PC-9 (cell line): ENCODE measurements at regions of chr20 and their contacts with region 1.

Region 1: DNA sequence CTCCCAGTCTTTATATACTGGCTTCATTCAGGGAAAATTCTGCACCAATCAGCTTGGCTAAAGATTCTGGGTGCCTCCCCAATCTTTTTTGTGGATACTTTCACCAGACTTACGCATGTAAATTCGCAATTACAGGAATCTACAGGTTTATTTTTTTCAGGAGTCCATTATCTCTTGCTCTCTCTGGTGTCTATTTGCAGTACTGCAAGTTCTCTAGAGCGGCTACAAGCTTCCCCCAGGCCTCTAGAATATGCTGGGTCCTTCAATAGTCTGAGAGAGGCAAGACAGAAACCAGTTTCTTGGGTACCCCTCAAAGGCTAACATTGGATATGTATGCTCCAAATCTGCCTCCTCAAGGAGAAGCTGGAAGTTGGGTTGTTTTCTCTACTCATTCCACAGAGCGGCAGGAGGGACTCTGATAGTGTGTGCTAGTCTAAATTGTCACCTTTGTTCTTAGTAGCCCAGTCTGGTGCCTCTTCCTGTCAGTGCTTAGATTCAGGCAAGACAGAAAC is 58.5 kb downstream of the SUN5 start:
- DNase-seq: no peak
- H3K4me3 ChIP-seq: no peak overlapping the region
- H3K27ac ChIP-seq: no peak overlapping the region
- H3K4me1 ChIP-seq: no peaks in the 10 kb centered on the region
- H3K27me3 ChIP-seq: peaks cover 45% of the 10 kb centered on the region
- CTCF ChIP-seq: peak; percentile 64

Region 2: GRCh38 chr20:32664678-32665159 is 281.0 kb before region 1 on chr20:
- CTCF ChIA-PET with region 1: interaction called, 10 read pairs
- POLR2A ChIA-PET with region 1: no interaction called
- intact Hi-C with region 1: no loop called
- DNase-seq: no peak
- H3K4me3 ChIP-seq: no peak overlapping the region
- H3K27ac ChIP-seq: no peak overlapping the region
- H3K4me1 ChIP-seq: peaks cover 11% of the 10 kb centered on the region
- H3K27me3 ChIP-seq: no peaks in the 10 kb centered on the region
- CTCF ChIP-seq: no peak

Region 3: GRCh38 chr20:32674362-32674789 is 271.4 kb before region 1 on chr20:
- CTCF ChIA-PET with region 1: no interaction called
- POLR2A ChIA-PET with region 1: no interaction called
- intact Hi-C with region 1: loop called (anchors 5 kb)
- DNase-seq: peak; percentile 58 to 73
- H3K4me3 ChIP-seq: no peak overlapping the region
- H3K27ac ChIP-seq: no peak overlapping the region
- H3K4me1 ChIP-seq: peaks cover 10% of the 10 kb centered on the region
- H3K27me3 ChIP-seq: no peaks in the 10 kb centered on the region
- CTCF ChIP-seq: peak; percentile 90

Region 4: GRCh38 chr20:32819992-32820710 is 125.6 kb before region 1 on chr20:
- CTCF ChIA-PET with region 1: no interaction called
- POLR2A ChIA-PET with region 1: interaction called, 15 read pairs
- intact Hi-C with region 1: no loop called
- DNase-seq: no peak
- H3K4me3 ChIP-seq: peak overlapping the region; percentile 76
- H3K27ac ChIP-seq: peak overlapping the region; percentile 50; the same call in 1 of the 2 replicates
- H3K4me1 ChIP-seq: peaks cover 34% of the 10 kb centered on the region
- H3K27me3 ChIP-seq: no peaks in the 10 kb centered on the region
- CTCF ChIP-seq: no peak